ENCODE measurements at regions of chr4 and their contacts with region 1.

Region 1: GRCh38 chr4:147151763-147152162 is 206.1 kb upstream of the TTC29 start:
- DNase-seq: no peak
- ATAC-seq: no peak
- H3K4me3 ChIP-seq: no peak overlapping the region
- H3K27ac ChIP-seq: no peak overlapping the region
- H3K4me1 ChIP-seq: no peaks in the 10 kb centered on the region
- H3K27me3 ChIP-seq: no peaks in the 10 kb centered on the region

Region 2: GRCh38 chr4:147060151-147060931 is 91.4 kb before region 1 on chr4:
- intact Hi-C with region 1: no loop called
- DNase-seq: no peak
- ATAC-seq: peak in 1 of 2 donors; percentile 59
- H3K4me3 ChIP-seq: no peak overlapping the region
- H3K27ac ChIP-seq: no peak overlapping the region
- H3K4me1 ChIP-seq: peaks cover 3% of the 10 kb centered on the region
- H3K27me3 ChIP-seq: no peaks in the 10 kb centered on the region

Region 3: GRCh38 chr4:147088146-147088545 is 63.6 kb before region 1 on chr4:
- intact Hi-C with region 1: no loop called
- DNase-seq: no peak
- ATAC-seq: no peak
- H3K4me3 ChIP-seq: no peak overlapping the region
- H3K27ac ChIP-seq: no peak overlapping the region
- H3K4me1 ChIP-seq: no peaks in the 10 kb centered on the region
- H3K27me3 ChIP-seq: no peaks in the 10 kb centered on the region

Region 4: DNA sequence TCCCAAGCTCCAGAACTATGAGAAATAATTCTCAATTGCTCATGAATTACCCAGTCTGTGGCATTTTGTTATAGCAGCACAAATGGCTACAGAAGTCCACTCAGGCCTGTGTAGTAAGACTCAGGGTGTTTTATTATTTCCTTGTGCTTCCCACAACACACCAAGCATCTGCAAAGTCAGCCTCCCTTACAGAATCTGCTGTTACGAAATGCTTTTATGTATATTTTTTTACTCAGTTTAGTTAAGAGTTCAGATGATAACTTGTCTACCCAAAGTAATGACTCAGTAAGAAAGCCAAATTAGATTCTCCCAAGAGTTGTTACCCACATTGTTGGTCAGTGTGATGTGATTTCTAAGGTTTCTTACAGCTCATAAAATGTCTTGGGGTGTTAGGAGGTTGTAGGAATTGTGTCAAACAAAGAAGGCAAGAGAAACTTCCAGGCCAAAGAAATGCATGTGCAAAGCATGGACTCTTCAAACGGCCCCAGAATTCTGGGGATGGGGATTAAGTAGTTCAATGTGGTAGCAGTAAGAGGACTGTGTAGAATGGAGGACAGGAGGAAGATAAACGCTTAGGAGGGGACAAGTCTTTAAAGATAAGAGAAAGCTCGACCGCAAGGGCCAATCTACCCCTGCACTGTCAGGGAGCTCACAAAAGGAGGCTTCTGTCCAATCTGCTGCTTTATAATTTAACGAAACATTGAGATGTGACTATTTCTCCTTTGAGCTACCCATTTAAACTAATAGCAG is 430.0 kb after region 1 on chr4:
- intact Hi-C with region 1: loop called in 2 of 4 experiments (anchors 5 kb)
- DNase-seq: no peak
- ATAC-seq: no peak
- H3K4me3 ChIP-seq: no peak overlapping the region
- H3K27ac ChIP-seq: no peak overlapping the region
- H3K4me1 ChIP-seq: no peaks in the 10 kb centered on the region
- H3K27me3 ChIP-seq: no peaks in the 10 kb centered on the region